Activated naive CD4-positive, alpha-beta T cell treated with anti-CD3 and anti-CD28 coated beads for 36 hours (primary cell): ENCODE measurements at regions of chr15 and their contacts with region 1.

Region 1: GRCh38 chr15:45198337-45199135 is 10.8 kb upstream of the SHF start:
- DNase-seq: peak; percentile 97
- H3K4me3 Mint-ChIP-seq: no peak overlapping the region
- H3K27ac Mint-ChIP-seq: no peak overlapping the region
- H3K4me1 Mint-ChIP-seq: peaks cover 5% of the 10 kb centered on the region
- H3K27me3 Mint-ChIP-seq: peaks cover 2% of the 10 kb centered on the region

Region 2: DNA sequence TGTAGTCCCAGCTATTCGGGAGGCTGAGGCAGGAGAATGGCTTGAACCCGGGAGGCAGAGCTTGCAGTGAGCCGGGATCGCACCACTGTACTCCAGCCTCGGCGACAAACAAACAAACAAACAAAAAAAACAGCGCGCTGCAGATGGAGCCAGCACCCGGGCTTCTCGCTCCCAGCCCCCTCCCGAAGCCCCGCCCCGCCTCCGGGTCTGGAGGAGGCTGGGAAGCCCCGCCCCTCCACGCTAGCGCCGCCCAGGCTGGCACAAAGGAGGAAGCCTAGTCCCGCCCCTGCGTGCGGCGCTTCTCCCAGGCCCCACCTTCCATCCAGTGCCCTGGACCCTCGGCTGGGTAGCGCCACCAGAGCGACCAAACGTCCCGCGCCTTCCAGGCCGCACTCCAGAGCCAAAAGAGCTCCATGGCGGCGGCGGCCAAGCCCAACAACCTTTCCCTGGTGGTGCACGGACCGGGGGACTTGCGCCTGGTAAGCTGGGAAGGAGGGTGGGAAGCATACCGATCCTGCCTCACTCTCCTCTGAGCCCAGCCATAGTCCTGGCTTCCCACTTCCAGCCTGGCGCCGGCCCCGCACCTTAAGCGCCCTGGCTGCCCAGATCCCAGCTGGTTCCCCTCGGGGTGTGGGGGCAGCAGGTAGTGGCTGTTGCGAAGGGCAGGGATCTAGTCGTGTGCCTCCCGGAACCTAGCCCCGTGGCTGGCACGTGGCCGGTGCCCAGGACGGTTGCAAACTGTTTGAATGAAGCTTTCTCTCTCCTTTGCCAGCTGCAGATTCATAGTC is 175.5 kb before region 1 on chr15 and contains the start of gene SORD:
- CTCF ChIA-PET with region 1: interaction called, 3 read pairs
- intact Hi-C with region 1: loop called (anchors 5 kb)
- DNase-seq: peak; percentile 94
- H3K4me3 Mint-ChIP-seq: peak within 1 kb of the TSS; percentile 83
- H3K27ac Mint-ChIP-seq: peak within 1 kb of the TSS; percentile 46
- H3K4me1 Mint-ChIP-seq: peaks cover 14% of the 10 kb centered on the region
- H3K27me3 Mint-ChIP-seq: peaks cover 7% of the 10 kb centered on the region
- total RNA-seq, gene SORD: 23.1 to 23.8 TPM

Region 3: DNA sequence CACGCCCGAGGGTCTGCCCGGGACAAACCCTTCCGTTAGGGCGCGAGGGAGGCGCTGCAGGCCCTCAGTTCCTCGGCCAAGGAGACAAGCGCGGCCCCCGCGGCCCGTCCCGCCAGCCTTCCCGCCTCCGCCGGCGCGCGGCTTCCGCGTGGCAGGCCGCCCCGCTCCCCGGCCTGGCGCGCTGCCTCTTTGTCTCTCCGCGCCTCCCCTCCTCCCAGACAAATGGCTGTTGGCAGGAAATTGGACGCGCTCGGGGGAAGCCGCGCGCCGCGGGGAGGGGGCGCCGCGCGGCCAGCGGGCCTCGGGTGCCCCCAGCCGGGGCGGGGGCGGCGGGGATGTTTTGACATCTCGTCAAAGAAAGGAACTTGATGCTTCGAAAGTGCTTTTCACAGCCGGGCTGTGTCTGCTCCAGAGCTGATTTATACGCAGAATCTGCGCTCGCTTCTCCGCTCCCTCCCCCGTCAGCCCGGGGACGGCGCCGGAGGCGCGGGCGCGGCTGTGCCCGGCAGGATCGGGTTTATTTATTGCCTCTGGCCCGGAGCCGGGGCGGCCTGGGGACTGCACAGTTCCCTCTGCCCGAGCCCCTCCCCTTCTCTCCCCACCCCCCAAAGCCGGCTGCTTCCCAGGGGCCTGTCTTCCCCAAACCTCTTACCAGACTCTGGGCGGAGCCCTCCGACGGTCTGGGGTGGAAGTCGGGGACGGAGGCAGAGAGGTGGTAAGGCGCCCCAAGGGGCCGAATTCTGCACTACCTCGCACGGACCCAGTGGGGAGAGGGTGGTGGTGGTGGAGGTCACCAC is 31.5 kb before region 1 on chr15:
- CTCF ChIA-PET with region 1: interaction called, 18 read pairs
- intact Hi-C with region 1: loop called (anchors 1 kb)
- DNase-seq: peak; percentile 89
- H3K4me3 Mint-ChIP-seq: peak overlapping the region; percentile 69
- H3K27ac Mint-ChIP-seq: peak overlapping the region; percentile 66
- H3K4me1 Mint-ChIP-seq: peaks cover 10% of the 10 kb centered on the region
- H3K27me3 Mint-ChIP-seq: no peaks in the 10 kb centered on the region

Region 4: DNA sequence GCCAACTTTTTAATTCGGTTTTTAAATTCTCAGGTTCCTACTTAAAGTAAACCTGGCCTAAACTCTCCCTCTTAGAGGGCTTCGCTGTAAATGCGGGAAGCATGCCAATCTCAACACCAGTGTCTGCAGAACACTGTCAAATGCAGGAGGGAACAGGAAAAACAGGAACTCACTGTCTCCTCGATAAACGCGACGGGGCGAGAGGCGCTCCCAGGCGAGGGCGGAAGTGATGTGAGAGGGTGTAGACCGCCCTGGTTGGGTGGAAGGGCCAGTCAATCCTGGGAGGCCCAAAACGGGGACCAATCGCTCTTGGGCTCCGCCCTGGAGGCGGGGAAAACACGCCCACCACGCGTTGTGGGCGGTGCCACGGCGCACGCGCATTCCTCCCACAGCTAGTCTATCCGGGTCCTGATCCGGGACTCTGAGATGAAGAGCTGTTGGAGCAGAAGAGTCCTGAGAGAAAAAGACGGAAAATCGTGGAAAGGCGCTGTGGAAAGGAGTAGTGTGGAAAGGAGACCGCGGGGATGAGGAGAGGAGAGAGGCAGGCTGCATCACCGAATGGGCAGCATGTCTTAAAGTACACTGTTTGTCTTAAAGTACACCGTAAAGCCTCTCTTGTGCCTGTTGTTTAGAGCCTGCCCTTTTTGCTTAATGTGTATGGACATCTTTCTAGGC is 80.6 kb after region 1 on chr15:
- CTCF ChIA-PET with region 1: interaction called, 3 read pairs
- intact Hi-C with region 1: loop called (anchors 1 kb)
- DNase-seq: peak; percentile 96
- H3K4me3 Mint-ChIP-seq: peak overlapping the region; percentile 81
- H3K27ac Mint-ChIP-seq: peak overlapping the region; percentile 52
- H3K4me1 Mint-ChIP-seq: peaks cover 17% of the 10 kb centered on the region
- H3K27me3 Mint-ChIP-seq: no peaks in the 10 kb centered on the region

Region 5: DNA sequence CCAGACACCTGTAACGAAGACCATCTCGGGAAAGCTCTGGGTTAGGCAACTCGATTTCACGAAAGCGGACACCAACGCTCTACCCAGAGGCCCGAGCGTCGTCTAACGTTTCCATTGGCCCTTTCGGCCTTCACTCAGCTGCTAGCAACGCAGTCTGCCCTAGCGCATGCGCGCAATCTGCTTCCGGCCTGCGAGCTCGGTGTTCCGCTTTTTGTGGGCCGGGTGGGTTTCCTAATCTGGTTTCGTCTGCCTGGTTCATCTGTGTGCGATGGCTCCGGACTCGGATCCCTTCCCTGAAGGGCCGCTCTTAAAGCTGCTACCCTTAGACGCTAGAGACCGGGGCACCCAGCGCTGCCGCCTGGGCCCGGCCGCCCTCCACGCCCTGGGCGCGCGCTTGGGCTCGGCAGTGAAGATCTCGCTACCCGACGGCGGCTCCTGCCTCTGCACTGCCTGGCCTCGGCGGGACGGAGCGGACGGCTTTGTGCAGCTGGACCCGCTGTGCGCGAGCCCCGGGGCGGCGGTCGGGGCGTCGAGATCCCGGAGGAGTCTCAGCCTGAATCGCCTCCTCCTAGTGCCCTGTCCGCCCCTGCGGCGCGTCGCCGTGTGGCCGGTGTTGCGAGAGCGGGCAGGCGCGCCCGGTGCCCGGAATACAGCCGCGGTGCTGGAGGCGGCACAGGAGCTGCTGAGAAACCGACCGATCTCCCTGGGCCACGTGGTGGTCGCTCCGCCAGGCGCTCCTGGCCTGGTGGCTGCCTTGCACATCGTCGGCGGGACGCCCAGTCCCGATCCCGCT is 203.8 kb after region 1 on chr15:
- CTCF ChIA-PET with region 1: interaction called, 15 read pairs
- intact Hi-C with region 1: loop called (anchors 1 kb)
- DNase-seq: peak; percentile 98
- H3K4me3 Mint-ChIP-seq: peak overlapping the region; percentile 99
- H3K27ac Mint-ChIP-seq: peak overlapping the region; percentile 89
- H3K4me1 Mint-ChIP-seq: peaks cover 27% of the 10 kb centered on the region
- H3K27me3 Mint-ChIP-seq: no peaks in the 10 kb centered on the region

Region 6: DNA sequence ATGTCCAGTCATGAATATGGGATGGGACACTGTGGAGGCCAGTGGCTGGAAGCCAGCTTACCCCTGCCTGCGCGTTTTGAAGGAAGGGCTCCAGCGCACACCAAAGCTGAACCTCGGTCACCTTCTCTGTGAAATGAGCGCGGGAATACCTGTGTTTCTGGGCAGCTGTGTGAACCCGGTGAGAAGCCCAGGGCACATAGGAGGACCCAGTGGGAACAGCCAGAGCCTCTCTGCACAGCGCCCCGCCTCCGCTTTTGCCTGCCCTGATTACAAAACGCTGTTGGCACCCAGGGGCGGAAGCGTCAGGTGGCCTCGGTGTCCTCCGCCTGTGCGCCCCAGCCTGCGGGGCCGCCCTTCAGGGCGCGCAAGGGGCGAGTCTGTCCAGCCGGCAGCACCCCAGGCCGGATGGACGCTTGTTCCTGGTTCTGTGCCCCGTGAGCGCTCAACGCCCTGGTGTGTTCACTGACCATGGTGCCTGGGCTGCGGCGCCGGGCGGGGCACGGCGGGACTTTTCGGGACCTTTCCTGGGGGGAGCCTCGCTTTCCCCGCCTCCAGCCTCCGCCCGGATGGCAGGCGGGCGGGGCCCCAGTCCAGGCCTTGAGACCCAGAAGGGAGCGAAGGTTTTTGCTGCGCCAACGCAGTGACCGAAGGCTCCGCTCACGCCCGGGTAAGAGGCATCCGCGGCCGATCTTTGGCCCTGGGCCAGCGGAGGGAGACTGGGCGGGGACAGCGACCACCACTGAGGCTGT is 436.1 kb after region 1 on chr15 and contains the start of gene SQOR:
- CTCF ChIA-PET with region 1: no interaction called
- intact Hi-C with region 1: loop called (anchors 1 kb)
- DNase-seq: peak; percentile 76
- H3K4me3 Mint-ChIP-seq: peak within 1 kb of the TSS; percentile 99
- H3K27ac Mint-ChIP-seq: peak within 1 kb of the TSS; percentile 86
- H3K4me1 Mint-ChIP-seq: peaks cover 43% of the 10 kb centered on the region
- H3K27me3 Mint-ChIP-seq: no peaks in the 10 kb centered on the region
- total RNA-seq, gene SQOR: 54.3 to 56.4 TPM